Activated CD4-positive, alpha-beta memory T cell treated with anti-CD3 and anti-CD28 coated beads for 36 hours (primary cell): ENCODE measurements at regions of chr10 and their contacts with region 1.

Region 1: DNA sequence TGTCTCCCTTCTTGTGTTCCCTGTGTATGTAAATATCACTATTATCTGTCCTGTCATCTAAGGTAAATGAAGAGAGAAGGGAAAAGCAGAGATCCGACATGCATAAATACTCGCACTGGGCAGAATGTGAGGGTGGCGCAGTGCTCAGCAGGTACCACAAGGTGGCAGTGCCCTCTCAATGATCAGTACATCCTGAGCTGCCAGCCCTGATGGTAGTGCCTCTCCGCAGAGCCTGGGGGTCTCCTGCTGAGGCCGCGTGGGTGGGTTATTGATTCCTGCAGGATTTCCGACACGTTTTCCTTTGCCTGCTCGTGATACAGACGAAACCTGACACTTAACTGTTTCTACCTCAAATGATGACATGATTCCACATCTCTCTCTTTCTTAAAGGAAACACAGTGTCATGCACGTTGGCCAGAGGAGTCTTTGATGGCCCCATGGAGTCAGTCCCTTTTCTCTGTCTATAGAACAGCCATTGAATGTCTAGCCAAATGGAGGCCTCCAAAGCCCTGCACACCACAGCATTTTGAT is 19.8 kb downstream of the RGR start:
- DNase-seq: peak; percentile 80
- H3K4me3 Mint-ChIP-seq: no peak overlapping the region
- H3K27ac Mint-ChIP-seq: no peak overlapping the region
- H3K4me1 Mint-ChIP-seq: peaks cover 28% of the 10 kb centered on the region
- H3K27me3 Mint-ChIP-seq: peaks cover 17% of the 10 kb centered on the region

Region 2: GRCh38 chr10:83764681-83765080 is 500.0 kb before region 1 on chr10:
- CTCF ChIA-PET with region 1: no interaction called
- POLR2A ChIA-PET with region 1: no interaction called
- intact Hi-C with region 1: no loop called
- DNase-seq: no peak
- H3K4me3 Mint-ChIP-seq: no peak overlapping the region
- H3K27ac Mint-ChIP-seq: no peak overlapping the region
- H3K4me1 Mint-ChIP-seq: no peaks in the 10 kb centered on the region
- H3K27me3 Mint-ChIP-seq: no peaks in the 10 kb centered on the region

Region 3: GRCh38 chr10:84308481-84309304 is 44.0 kb after region 1 on chr10:
- CTCF ChIA-PET with region 1: interaction called, 6 read pairs
- POLR2A ChIA-PET with region 1: no interaction called
- intact Hi-C with region 1: loop called (anchors 1 kb)
- DNase-seq: peak; percentile 74
- H3K4me3 Mint-ChIP-seq: peak overlapping the region; percentile 45
- H3K27ac Mint-ChIP-seq: peak overlapping the region; percentile 82
- H3K4me1 Mint-ChIP-seq: peaks cover 34% of the 10 kb centered on the region
- H3K27me3 Mint-ChIP-seq: no peaks in the 10 kb centered on the region

Region 4: GRCh38 chr10:84333864-84334451 is 69.3 kb after region 1 on chr10:
- CTCF ChIA-PET with region 1: interaction called, 29 read pairs
- POLR2A ChIA-PET with region 1: interaction called, 4 read pairs
- intact Hi-C with region 1: loop called (anchors 1 kb)
- DNase-seq: peak; percentile 82
- H3K4me3 Mint-ChIP-seq: peak overlapping the region; percentile 36
- H3K27ac Mint-ChIP-seq: peak overlapping the region; percentile 78
- H3K4me1 Mint-ChIP-seq: peaks cover 40% of the 10 kb centered on the region
- H3K27me3 Mint-ChIP-seq: no peaks in the 10 kb centered on the region

Region 5: GRCh38 chr10:84360637-84361365 is 96.1 kb after region 1 on chr10:
- CTCF ChIA-PET with region 1: interaction called, 19 read pairs
- POLR2A ChIA-PET with region 1: no interaction called
- intact Hi-C with region 1: loop called (anchors 1 kb)
- DNase-seq: no peak
- H3K4me3 Mint-ChIP-seq: no peak overlapping the region
- H3K27ac Mint-ChIP-seq: no peak overlapping the region
- H3K4me1 Mint-ChIP-seq: peaks cover 79% of the 10 kb centered on the region
- H3K27me3 Mint-ChIP-seq: no peaks in the 10 kb centered on the region

Region 6: GRCh38 chr10:84429926-84430520 is 165.3 kb after region 1 on chr10:
- CTCF ChIA-PET with region 1: interaction called, 11 read pairs
- POLR2A ChIA-PET with region 1: no interaction called
- intact Hi-C with region 1: loop called (anchors 5 kb)
- DNase-seq: peak; percentile 76
- H3K4me3 Mint-ChIP-seq: no peak overlapping the region
- H3K27ac Mint-ChIP-seq: no peak overlapping the region
- H3K4me1 Mint-ChIP-seq: peaks cover 31% of the 10 kb centered on the region
- H3K27me3 Mint-ChIP-seq: no peaks in the 10 kb centered on the region